SK-N-SH (cell line): ENCODE measurements at regions of chr10 and their contacts with region 1.

Region 1: DNA sequence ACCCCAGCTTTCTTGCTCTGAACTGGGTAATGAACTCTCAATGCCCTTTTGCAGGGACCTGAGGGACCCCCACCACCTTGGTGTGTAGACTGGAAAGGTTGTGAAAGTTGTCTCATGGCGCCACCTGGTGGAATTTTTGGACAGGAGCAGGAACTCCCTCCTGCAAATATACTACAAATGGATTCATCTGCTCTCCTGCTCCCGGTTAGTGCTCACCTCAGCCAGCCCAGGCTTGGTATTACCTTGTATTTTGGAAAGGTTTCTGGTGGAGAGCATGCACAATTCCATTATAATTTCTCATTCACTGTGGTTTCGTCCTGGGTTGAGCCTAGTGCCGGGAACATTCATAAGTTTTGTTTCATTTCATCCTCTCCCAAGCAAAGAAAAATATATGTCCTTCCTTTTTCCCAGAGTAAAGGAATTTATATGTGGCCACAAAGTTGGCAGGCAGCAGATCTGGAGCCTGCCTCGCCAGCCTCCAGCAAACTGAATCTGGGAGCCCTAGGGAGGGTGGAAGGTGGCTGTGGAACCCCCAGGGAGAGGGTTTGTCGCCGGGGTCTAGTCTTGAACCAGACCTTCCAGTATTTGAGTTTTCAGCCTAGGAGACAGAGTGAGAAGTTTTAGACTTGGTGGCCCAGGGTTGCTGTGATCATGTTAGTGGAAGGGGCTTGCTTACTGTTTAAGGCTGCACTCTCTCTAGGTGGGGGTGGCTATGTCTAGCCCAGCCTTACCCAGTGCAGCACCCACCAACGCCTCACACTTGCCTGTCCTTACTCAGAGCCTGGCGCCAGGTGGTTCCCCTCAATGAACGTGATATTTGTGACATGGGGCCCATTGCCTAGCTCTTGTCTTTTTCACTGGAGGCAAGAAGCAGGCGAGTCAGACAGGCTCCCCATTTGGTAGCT is 9.5 kb downstream of the FAM241B start:
- DNase-seq: peak; percentile 81
- H3K4me3 ChIP-seq: peak overlapping the region in 1 of 2 experiments; percentile 48; a peak in 1 of 4 replicates
- H3K27ac ChIP-seq: no peak overlapping the region
- H3K4me1 ChIP-seq: no peaks in the 10 kb centered on the region; a peak in 1 of 4 replicates
- H3K27me3 ChIP-seq: no peaks in the 10 kb centered on the region
- CTCF ChIP-seq: peak; percentile 93
- EP300 ChIP-seq: no peak
- RAD21 ChIP-seq: peak; percentile 90

Region 2: GRCh38 chr10:69458426-69459108 is 181.0 kb before region 1 on chr10:
- CTCF ChIA-PET with region 1: no interaction called
- POLR2A ChIA-PET with region 1: no interaction called
- DNase-seq: no peak
- H3K4me3 ChIP-seq: no peak overlapping the region
- H3K27ac ChIP-seq: no peak overlapping the region
- H3K4me1 ChIP-seq: peaks cover 0 to 15% of the 10 kb centered on the region in 2 experiments; a peak in 1 of 4 replicates
- H3K27me3 ChIP-seq: no peaks in the 10 kb centered on the region
- CTCF ChIP-seq: no peak
- EP300 ChIP-seq: no peak
- RAD21 ChIP-seq: no peak

Region 3: GRCh38 chr10:69527961-69528360 is 111.6 kb before region 1 on chr10:
- CTCF ChIA-PET with region 1: interaction called, 44 read pairs
- POLR2A ChIA-PET with region 1: no interaction called
- DNase-seq: no peak
- H3K4me3 ChIP-seq: no peak overlapping the region
- H3K27ac ChIP-seq: no peak overlapping the region
- H3K4me1 ChIP-seq: no peaks in the 10 kb centered on the region
- H3K27me3 ChIP-seq: peaks cover 21% of the 10 kb centered on the region; the same call in 1 of the 2 replicates
- CTCF ChIP-seq: no peak
- EP300 ChIP-seq: no peak
- RAD21 ChIP-seq: no peak

Region 4: DNA sequence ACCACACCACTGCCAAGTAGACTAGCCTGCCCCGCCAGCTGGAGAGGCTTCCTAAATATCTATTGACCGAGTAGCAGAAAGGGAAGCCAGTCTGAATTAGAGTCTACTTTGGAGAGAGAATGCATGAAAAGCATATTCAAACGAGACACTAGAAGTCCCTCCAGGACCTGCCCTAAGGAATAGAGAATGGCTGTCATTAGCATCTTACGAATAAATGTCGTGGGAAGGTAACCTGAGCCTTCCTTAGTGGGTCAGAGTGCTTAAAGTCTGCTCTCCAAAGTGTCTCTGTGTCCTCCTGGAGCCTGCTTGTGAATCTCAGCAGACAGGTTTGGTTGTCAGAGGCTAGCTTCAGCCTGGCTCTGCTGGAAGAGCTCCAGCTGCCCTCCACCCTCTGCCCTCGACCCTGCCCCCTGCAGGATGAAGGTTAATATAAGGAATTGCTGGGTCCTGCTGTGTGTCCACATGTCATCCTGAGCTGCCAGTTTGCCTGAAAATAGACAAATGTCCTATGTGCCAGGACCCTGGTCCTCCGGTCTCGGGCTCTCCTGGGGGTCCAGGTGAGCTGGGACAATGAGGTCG is 23.9 kb after region 1 on chr10:
- CTCF ChIA-PET with region 1: interaction called, 152 read pairs
- POLR2A ChIA-PET with region 1: interaction called, 3 read pairs
- DNase-seq: no peak
- H3K4me3 ChIP-seq: no peak overlapping the region
- H3K27ac ChIP-seq: no peak overlapping the region
- H3K4me1 ChIP-seq: peaks cover 0 to 22% of the 10 kb centered on the region in 2 experiments; a peak in 1 of 4 replicates
- H3K27me3 ChIP-seq: peaks cover 47% of the 10 kb centered on the region
- CTCF ChIP-seq: no peak
- EP300 ChIP-seq: no peak
- RAD21 ChIP-seq: no peak